ENCODE measurements at regions of chr9 and their contacts with region 1.

Region 1: DNA sequence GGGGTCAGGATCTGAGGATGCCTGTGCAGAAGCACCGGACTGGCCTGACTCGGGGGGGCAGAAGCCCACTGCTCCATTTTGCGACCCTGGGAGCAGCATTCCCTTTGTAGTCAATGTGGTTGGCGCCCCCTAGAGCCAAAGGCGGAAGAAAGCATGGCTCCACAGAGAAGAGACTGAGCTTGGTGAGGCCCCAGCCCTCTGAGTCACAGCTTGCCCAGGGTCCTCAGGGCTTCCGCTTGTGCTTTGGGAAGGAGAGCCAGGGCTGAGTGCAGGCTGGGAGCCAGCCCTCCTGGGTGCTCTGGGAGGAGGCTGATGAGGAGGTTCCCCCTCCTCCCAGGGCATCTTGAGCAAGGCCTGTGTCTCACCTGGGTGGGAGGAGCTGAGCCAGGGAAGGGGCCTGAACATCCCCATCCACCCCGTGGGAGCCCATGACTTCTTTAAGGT is 5.5 kb upstream of the AQP3 start:
- DNase-seq: peak; percentile 76
- H3K4me3 ChIP-seq: peak overlapping the region in 1 of 2 experiments; percentile 13; a peak in 1 of 4 replicates
- H3K27ac ChIP-seq: no peak overlapping the region
- H3K4me1 ChIP-seq: peaks cover 0 to 9% of the 10 kb centered on the region in 2 experiments; a peak in 1 of 4 replicates
- H3K27me3 ChIP-seq: no peaks in the 10 kb centered on the region
- CTCF ChIP-seq: peak; percentile 79
- EP300 ChIP-seq: no peak
- RAD21 ChIP-seq: peak; percentile 67

Region 2: GRCh38 chr9:33404788-33405362 is 48.0 kb before region 1 on chr9:
- CTCF ChIA-PET with region 1: interaction called, 26 read pairs
- POLR2A ChIA-PET with region 1: interaction called, 3 read pairs
- DNase-seq: no peak
- H3K4me3 ChIP-seq: no peak overlapping the region
- H3K27ac ChIP-seq: no peak overlapping the region
- H3K4me1 ChIP-seq: no peaks in the 10 kb centered on the region
- H3K27me3 ChIP-seq: no peaks in the 10 kb centered on the region
- CTCF ChIP-seq: no peak
- EP300 ChIP-seq: no peak
- RAD21 ChIP-seq: no peak

Region 3: GRCh38 chr9:33415501-33416038 is 37.3 kb before region 1 on chr9:
- CTCF ChIA-PET with region 1: interaction called, 20 read pairs
- POLR2A ChIA-PET with region 1: no interaction called
- DNase-seq: peak; percentile 76
- H3K4me3 ChIP-seq: no peak overlapping the region
- H3K27ac ChIP-seq: no peak overlapping the region
- H3K4me1 ChIP-seq: no peaks in the 10 kb centered on the region
- H3K27me3 ChIP-seq: no peaks in the 10 kb centered on the region
- CTCF ChIP-seq: peak; percentile 71
- EP300 ChIP-seq: no peak
- RAD21 ChIP-seq: peak; percentile 54

Region 4: GRCh38 chr9:33436440-33436839 is 16.4 kb before region 1 on chr9:
- CTCF ChIA-PET with region 1: interaction called, 14 read pairs
- POLR2A ChIA-PET with region 1: no interaction called
- DNase-seq: no peak
- H3K4me3 ChIP-seq: no peak overlapping the region
- H3K27ac ChIP-seq: no peak overlapping the region
- H3K4me1 ChIP-seq: no peaks in the 10 kb centered on the region
- H3K27me3 ChIP-seq: peaks cover 4% of the 10 kb centered on the region; the same call in 1 of the 2 replicates
- CTCF ChIP-seq: no peak
- EP300 ChIP-seq: no peak
- RAD21 ChIP-seq: no peak

Region 5: GRCh38 chr9:33473643-33474352 is 20.9 kb after region 1 on chr9 and contains the start of gene NOL6:
- CTCF ChIA-PET with region 1: interaction called, 33 read pairs
- POLR2A ChIA-PET with region 1: no interaction called
- DNase-seq: peak; percentile 96
- H3K4me3 ChIP-seq: peak within 1 kb of the TSS; percentile 74 to 79
- H3K27ac ChIP-seq: peak within 1 kb of the TSS; percentile 69 to 73
- H3K4me1 ChIP-seq: peaks cover 0 to 11% of the 10 kb centered on the region in 2 experiments; a peak in 1 of 4 replicates
- H3K27me3 ChIP-seq: no peaks in the 10 kb centered on the region
- CTCF ChIP-seq: no peak
- EP300 ChIP-seq: no peak
- RAD21 ChIP-seq: no peak
- polyA plus RNA-seq, gene NOL6: 52.2 and 61.3 TPM in 2 replicates

Region 6: GRCh38 chr9:33498387-33498786 is 45.5 kb after region 1 on chr9:
- CTCF ChIA-PET with region 1: no interaction called
- POLR2A ChIA-PET with region 1: no interaction called
- DNase-seq: no peak
- H3K4me3 ChIP-seq: no peak overlapping the region
- H3K27ac ChIP-seq: no peak overlapping the region
- H3K4me1 ChIP-seq: no peaks in the 10 kb centered on the region
- H3K27me3 ChIP-seq: no peaks in the 10 kb centered on the region
- CTCF ChIP-seq: peak; percentile 58
- EP300 ChIP-seq: no peak
- RAD21 ChIP-seq: no peak

Measured in SK-N-SH (cell line).